Stomach (tissue), 19 donors: ENCODE measurements at regions of chr3 and their contacts with region 1.

Region 1: GRCh38 chr3:27134165-27134796 is 234.9 kb downstream of the NEK10 start:
- DNase-seq: peak; percentile 65 to 90
- H3K4me3 ChIP-seq: no peak overlapping the region
- H3K27ac ChIP-seq: no peak overlapping the region
- H3K4me1 ChIP-seq: peaks cover 0 to 11% (median 2%) of the 10 kb centered on the region in 4 donors
- H3K27me3 ChIP-seq: no peaks in the 10 kb centered on the region
- CTCF ChIP-seq: peak in 5 of 7 experiments; percentile 73 to 89 (median 86)
- EP300 ChIP-seq: no peak
- POLR2A ChIP-seq: no peak

Region 2: DNA sequence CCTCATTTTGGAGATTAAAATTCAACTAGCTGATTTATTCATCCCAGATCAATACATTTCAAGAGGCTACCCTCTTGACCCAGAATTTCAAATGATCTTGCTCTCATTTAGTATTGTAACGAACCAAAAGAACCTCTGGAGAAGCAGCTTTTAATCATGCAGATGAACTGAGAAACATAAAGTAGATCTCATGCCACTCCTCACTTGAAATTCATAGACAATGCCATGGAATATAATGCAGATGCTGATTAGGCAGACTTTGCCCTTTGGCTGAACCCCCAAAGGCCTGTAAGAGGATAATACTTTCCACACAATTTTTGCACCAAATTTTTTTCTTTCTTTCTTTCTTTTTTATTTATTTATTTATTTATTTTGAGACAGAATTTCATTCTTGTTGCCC is 123.4 kb before region 1 on chr3:
- intact Hi-C with region 1: no loop called
- DNase-seq: no peak
- H3K4me3 ChIP-seq: no peak overlapping the region
- H3K27ac ChIP-seq: no peak overlapping the region
- H3K4me1 ChIP-seq: no peaks in the 10 kb centered on the region
- H3K27me3 ChIP-seq: no peaks in the 10 kb centered on the region
- CTCF ChIP-seq: no peak
- EP300 ChIP-seq: no peak
- POLR2A ChIP-seq: no peak

Region 3: DNA sequence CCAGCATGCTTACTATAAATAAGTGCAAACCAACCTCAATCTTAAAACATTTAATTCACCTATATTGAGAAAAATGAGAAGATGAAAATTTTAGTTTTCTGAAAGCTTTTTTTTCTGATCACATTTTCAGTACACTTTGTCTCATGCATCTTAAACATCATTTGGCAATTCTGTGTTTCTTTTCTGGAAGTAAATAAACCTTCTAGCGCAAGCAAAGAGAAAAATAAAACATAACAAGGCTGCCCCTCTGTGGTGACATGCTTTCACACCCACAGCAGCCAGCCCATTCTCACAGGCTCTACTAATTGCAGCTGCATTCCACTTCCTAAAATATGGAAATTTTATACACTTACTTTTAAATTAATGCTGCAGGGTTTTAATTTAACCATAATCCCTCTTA is 144.8 kb after region 1 on chr3:
- intact Hi-C with region 1: loop called (anchors 10 kb)
- DNase-seq: peak; percentile 32 to 69
- H3K4me3 ChIP-seq: no peak overlapping the region
- H3K27ac ChIP-seq: no peak overlapping the region
- H3K4me1 ChIP-seq: peaks cover 0 to 28% (median 0%) of the 10 kb centered on the region in 4 donors
- H3K27me3 ChIP-seq: no peaks in the 10 kb centered on the region
- CTCF ChIP-seq: peak in 5 of 7 experiments; percentile 25 to 44 (median 34)
- EP300 ChIP-seq: no peak
- POLR2A ChIP-seq: no peak